Activated naive CD4-positive, alpha-beta T cell treated with anti-CD3 and anti-CD28 coated beads, Interleukin-2, amount 10 ng/mL, durations not matched to agents 7 days and 5 days (primary cell): ENCODE measurements at regions of chr17 and their contacts with region 1.

Region 1: DNA sequence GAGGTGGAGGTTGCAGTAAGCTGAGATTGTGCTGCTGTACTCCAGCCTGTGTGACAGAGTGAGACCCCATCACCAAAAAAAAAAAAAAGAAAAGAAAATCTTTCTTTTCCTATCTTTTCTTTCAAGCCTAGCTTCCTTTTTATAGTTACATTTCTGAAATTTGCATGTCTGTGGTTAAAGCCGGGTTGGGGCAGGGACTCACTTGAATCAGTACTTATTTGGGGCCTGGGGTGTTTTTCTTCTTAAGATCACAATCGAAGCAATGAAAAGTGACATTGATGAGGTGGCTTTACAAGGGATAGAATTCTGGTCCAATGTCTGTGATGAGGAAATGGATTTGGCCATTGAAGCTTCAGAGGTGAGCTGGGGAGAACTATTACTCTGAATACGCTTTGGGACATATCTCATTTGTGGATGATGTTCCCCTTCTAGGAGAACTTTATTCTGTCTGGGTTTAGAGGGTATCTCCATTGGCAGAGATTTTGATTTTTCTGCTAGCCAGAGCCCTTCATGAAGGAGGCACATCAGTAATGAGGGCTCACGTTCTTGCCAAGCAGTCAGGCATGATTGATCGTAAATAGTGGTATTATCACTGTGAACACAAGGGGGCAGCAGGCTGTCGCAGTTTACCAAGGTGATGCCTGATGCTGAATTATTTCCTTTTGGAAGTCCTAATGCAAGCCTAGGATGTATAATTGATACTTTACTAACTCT is 14.3 kb downstream of the KPNB1 start:
- DNase-seq: peak; percentile 74
- H3K4me3 Mint-ChIP-seq: no peak overlapping the region
- H3K27ac Mint-ChIP-seq: peak overlapping the region; percentile 50
- H3K4me1 Mint-ChIP-seq: peaks cover 44% of the 10 kb centered on the region
- H3K27me3 Mint-ChIP-seq: no peaks in the 10 kb centered on the region

Region 2: GRCh38 chr17:47675380-47676198 is 11.5 kb after region 1 on chr17:
- CTCF ChIA-PET with region 1: interaction called, 73 read pairs
- DNase-seq: no peak
- H3K4me3 Mint-ChIP-seq: no peak overlapping the region
- H3K27ac Mint-ChIP-seq: no peak overlapping the region
- H3K4me1 Mint-ChIP-seq: peaks cover 17% of the 10 kb centered on the region
- H3K27me3 Mint-ChIP-seq: no peaks in the 10 kb centered on the region

Region 3: GRCh38 chr17:47713980-47714700 is 50.1 kb after region 1 on chr17:
- CTCF ChIA-PET with region 1: no interaction called
- DNase-seq: no peak
- H3K4me3 Mint-ChIP-seq: no peak overlapping the region
- H3K27ac Mint-ChIP-seq: no peak overlapping the region
- H3K4me1 Mint-ChIP-seq: peaks cover 69% of the 10 kb centered on the region
- H3K27me3 Mint-ChIP-seq: peaks cover 42% of the 10 kb centered on the region

Region 4: DNA sequence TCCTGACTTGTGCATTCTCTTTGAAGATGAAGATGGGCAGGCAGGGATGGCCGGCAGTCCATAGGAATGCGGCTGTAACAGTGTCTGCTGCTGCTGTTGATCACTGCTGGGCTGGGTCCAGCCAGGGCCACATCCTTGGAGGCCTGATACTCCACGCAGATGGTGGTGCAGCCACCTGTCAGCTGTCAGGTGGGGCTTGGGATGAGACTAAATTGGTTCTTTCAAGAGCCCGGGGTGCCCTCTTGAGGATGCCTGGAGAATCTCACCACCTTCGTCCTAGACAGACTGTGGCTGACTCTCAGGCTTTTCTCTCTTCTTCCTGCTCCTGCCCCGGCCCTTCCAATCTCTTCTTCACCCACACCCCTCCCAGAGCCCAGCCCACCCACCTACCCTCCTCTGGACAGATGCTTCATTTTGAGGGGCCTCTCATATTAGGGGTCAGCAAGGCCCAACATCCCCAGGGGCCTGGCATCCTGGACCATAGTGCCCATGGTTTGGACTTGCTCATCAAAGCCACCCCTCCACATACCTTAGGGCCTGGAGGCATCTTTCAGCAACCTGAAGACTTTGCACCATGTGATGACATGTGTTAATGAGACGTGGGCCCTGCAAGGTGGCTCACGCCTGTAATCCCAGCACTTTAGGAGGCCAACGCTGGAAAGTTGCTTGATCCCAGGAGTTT is 138.4 kb after region 1 on chr17:
- CTCF ChIA-PET with region 1: interaction called, 10 read pairs
- DNase-seq: peak; percentile 77
- H3K4me3 Mint-ChIP-seq: no peak overlapping the region
- H3K27ac Mint-ChIP-seq: no peak overlapping the region
- H3K4me1 Mint-ChIP-seq: no peaks in the 10 kb centered on the region
- H3K27me3 Mint-ChIP-seq: peaks cover 39% of the 10 kb centered on the region